ENCODE measurements at regions of chr4 and their contacts with region 1.

Region 1: GRCh38 chr4:156475322-156475721 is 496.3 kb downstream of the PDGFC start:
- DNase-seq: no peak
- ATAC-seq: peak in 6 of 8 donors; percentile 42 to 71 (median 63)
- H3K4me3 ChIP-seq: no peak overlapping the region
- H3K27ac ChIP-seq: no peak overlapping the region
- H3K4me1 ChIP-seq: no peaks in the 10 kb centered on the region
- H3K27me3 ChIP-seq: no peaks in the 10 kb centered on the region
- CTCF ChIP-seq: peak; percentile 20 to 67 (median 55)

Region 2: GRCh38 chr4:156677131-156677531 is 201.8 kb after region 1 on chr4:
- intact Hi-C with region 1: loop called in 1 of 10 experiments (anchors 10 kb)
- DNase-seq: no peak
- ATAC-seq: no peak
- H3K4me3 ChIP-seq: no peak overlapping the region
- H3K27ac ChIP-seq: no peak overlapping the region
- H3K4me1 ChIP-seq: no peaks in the 10 kb centered on the region
- H3K27me3 ChIP-seq: no peaks in the 10 kb centered on the region
- CTCF ChIP-seq: peak in 5 of 9 donors; percentile 10 to 33 (median 16)

Region 3: DNA sequence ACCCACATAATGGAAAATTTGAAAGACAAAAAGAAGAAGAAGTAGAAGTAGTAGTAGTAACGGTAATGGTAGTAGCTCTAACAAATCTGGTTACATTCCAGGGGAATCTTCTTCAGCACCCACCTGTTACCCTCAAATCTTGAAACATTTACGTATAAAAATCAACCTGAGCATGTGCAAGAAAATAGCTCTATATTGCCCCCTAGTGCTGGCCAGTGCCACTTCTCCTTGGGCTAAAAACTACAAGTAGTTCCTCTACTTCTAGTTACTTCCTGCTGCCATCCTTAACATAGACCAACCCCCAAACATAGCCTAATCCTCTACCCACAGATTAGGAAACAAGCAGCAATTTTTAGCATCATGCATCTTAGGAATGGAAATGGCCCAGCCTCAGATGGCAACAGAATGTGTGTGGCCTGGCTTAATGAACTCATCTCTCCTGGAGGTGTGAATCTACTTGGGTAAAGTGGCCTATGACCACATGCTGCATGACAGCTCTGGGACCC is 493.2 kb after region 1 on chr4:
- intact Hi-C with region 1: loop called in 5 of 10 experiments (anchors 5 to 10 kb)
- DNase-seq: peak; percentile 15 to 57
- ATAC-seq: peak in 5 of 8 donors; percentile 25 to 43 (median 38)
- H3K4me3 ChIP-seq: peak overlapping the region in 5 of 10 donors; percentile 74 to 86 (median 80)
- H3K27ac ChIP-seq: peak overlapping the region in 5 of 10 donors; percentile 6 to 87 (median 18)
- H3K4me1 ChIP-seq: peaks cover 0 to 53% (median 30%) of the 10 kb centered on the region in 9 donors
- H3K27me3 ChIP-seq: peaks cover 0 to 7% (median 0%) of the 10 kb centered on the region in 7 donors
- CTCF ChIP-seq: peak; percentile 60 to 82 (median 79)

Measured in heart right ventricle (tissue), 16 donors.